Upper lobe of right lung (tissue), 1 donor: ENCODE measurements at regions of chr12 and their contacts with region 1.

Region 1: GRCh38 chr12:42364698-42365097 is 38.7 kb downstream of the PPHLN1 start:
- DNase-seq: no peak
- ATAC-seq: no peak
- H3K4me3 ChIP-seq: no peak overlapping the region
- H3K27ac ChIP-seq: no peak overlapping the region
- H3K4me1 ChIP-seq: no peaks in the 10 kb centered on the region
- H3K27me3 ChIP-seq: no peaks in the 10 kb centered on the region
- CTCF ChIP-seq: no peak

Region 2: DNA sequence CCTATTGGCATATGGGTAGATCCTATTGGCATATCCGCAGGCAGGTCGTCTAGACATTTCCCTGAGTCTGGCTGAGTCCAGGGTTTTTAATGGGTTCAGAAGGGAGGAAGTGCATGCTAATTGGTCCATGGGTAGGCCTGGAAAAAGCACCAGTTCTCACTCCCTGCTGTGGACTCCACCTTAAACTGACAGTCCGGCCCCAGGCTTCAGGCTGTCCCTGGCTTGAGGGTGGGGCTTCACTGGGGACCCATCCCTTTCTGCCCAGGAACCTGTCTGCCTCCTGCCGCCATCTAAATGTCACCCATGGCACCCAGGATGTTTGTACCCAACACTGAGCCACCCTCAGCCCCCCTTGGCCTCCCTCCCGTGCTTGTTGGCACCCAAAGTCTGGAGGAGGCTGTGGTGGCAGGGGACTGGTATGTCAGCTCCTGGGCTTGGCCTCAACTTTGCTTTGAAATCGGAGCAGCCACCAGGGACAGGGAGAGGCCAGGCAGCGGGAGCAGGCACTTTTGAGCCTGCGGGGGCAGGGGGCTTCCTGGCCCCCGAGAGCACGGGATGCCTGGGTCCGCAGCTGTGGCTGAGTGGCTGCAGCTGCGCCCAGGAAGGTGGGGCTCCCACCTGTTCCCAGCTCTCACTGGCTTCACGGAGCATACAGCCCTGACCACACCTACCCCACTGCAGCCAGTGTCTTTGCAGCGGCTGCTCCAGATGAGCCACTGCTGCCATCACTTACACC is 97.1 kb before region 1 on chr12:
- intact Hi-C with region 1: no loop called
- DNase-seq: no peak
- ATAC-seq: no peak
- H3K4me3 ChIP-seq: no peak overlapping the region
- H3K27ac ChIP-seq: no peak overlapping the region
- H3K4me1 ChIP-seq: no peaks in the 10 kb centered on the region
- H3K27me3 ChIP-seq: no peaks in the 10 kb centered on the region
- CTCF ChIP-seq: no peak

Region 3: GRCh38 chr12:42382013-42382680 is 17.4 kb after region 1 on chr12:
- intact Hi-C with region 1: loop called (anchors 2 kb)
- DNase-seq: no peak
- ATAC-seq: peak; percentile 48
- H3K4me3 ChIP-seq: no peak overlapping the region
- H3K27ac ChIP-seq: no peak overlapping the region
- H3K4me1 ChIP-seq: peaks cover 14% of the 10 kb centered on the region
- H3K27me3 ChIP-seq: no peaks in the 10 kb centered on the region
- CTCF ChIP-seq: no peak